ENCODE measurements at regions of chr5 and their contacts with region 1.

Region 1: GRCh38 chr5:172902497-172903200 is 56.6 kb upstream of the RPL26L1 start:
- DNase-seq: peak; percentile 79 to 97
- H3K4me3 ChIP-seq: no peak overlapping the region
- H3K27ac ChIP-seq: peak overlapping the region; percentile 99
- H3K4me1 ChIP-seq: peaks cover 51% of the 10 kb centered on the region
- H3K27me3 ChIP-seq: no peaks in the 10 kb centered on the region
- CTCF ChIP-seq: peak; percentile 72

Region 2: GRCh38 chr5:172764849-172765765 is 137.5 kb before region 1 on chr5:
- CTCF ChIA-PET with region 1: no interaction called
- POLR2A ChIA-PET with region 1: interaction called, 9 read pairs
- intact Hi-C with region 1: loop called (anchors 1 kb)
- DNase-seq: peak; percentile 97 to 99
- H3K4me3 ChIP-seq: peak overlapping the region; percentile 52; the same call in 1 of the 2 replicates
- H3K27ac ChIP-seq: peak overlapping the region; percentile 59
- H3K4me1 ChIP-seq: peaks cover 31% of the 10 kb centered on the region
- H3K27me3 ChIP-seq: no peaks in the 10 kb centered on the region
- CTCF ChIP-seq: no peak

Region 3: GRCh38 chr5:172801184-172801671 is 101.4 kb before region 1 on chr5:
- CTCF ChIA-PET with region 1: interaction called, 5 read pairs
- POLR2A ChIA-PET with region 1: no interaction called
- intact Hi-C with region 1: loop called (anchors 1 kb)
- DNase-seq: peak; percentile 67 to 97
- H3K4me3 ChIP-seq: no peak overlapping the region
- H3K27ac ChIP-seq: peak overlapping the region; percentile 97
- H3K4me1 ChIP-seq: peaks cover 57% of the 10 kb centered on the region
- H3K27me3 ChIP-seq: no peaks in the 10 kb centered on the region
- CTCF ChIP-seq: no peak

Region 4: DNA sequence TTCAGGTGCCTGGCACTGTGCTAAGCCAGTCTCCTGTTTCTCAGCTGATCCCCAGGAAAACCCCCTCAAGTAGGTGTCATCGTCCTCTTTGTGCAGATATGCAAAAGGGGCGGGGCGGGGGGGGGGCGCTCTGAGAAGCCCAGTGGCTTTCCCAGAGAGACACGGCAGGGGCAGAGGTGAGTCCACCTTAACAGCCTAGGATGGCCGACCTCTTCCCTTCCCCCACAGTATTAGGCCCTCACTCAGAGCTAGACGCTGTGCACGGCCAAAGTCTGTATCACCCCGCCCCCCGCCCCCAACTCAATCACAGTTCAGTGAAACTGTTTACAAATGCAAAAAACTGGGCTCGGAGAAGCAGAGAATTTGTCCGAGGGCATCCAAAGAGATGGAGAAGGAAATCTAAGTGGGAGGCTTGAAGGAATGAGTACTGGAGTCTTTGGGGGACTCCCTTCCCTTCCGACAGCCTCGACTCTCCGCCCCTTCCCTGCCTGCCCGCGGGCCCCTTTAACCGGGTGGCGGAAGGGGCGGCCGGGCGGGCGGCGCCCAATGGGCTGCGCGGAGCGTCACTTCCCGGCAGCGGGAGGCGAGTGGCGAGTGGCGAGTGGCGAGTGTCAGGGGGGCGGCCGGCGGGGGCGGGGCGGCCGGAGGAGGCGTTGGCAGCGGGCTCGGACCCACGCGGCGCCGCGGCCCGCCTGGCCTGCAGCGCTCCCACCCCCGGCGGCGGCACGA is 68.8 kb before region 1 on chr5 and contains the start of gene ERGIC1:
- CTCF ChIA-PET with region 1: no interaction called
- POLR2A ChIA-PET with region 1: no interaction called
- intact Hi-C with region 1: loop called (anchors 1 kb)
- DNase-seq: peak; percentile 64 to 88
- H3K4me3 ChIP-seq: peak within 1 kb of the TSS; percentile 85
- H3K27ac ChIP-seq: peak within 1 kb of the TSS; percentile 63
- H3K4me1 ChIP-seq: peaks cover 20% of the 10 kb centered on the region
- H3K27me3 ChIP-seq: no peaks in the 10 kb centered on the region
- CTCF ChIP-seq: no peak
- total RNA-seq, gene ERGIC1: 106 and 159 TPM in 2 replicates

Region 5: GRCh38 chr5:172868924-172869591 is 33.6 kb before region 1 on chr5:
- CTCF ChIA-PET with region 1: no interaction called
- POLR2A ChIA-PET with region 1: no interaction called
- intact Hi-C with region 1: loop called (anchors 2 kb)
- DNase-seq: peak; percentile 63 to 88
- H3K4me3 ChIP-seq: no peak overlapping the region
- H3K27ac ChIP-seq: peak overlapping the region; percentile 84
- H3K4me1 ChIP-seq: peaks cover 44% of the 10 kb centered on the region
- H3K27me3 ChIP-seq: no peaks in the 10 kb centered on the region
- CTCF ChIP-seq: no peak

Region 6: GRCh38 chr5:172932313-172933017 is 29.8 kb after region 1 on chr5:
- CTCF ChIA-PET with region 1: interaction called, 4 read pairs
- POLR2A ChIA-PET with region 1: no interaction called
- intact Hi-C with region 1: loop called (anchors 1 kb)
- DNase-seq: peak in 1 of 2 experiments; percentile 70
- H3K4me3 ChIP-seq: no peak overlapping the region
- H3K27ac ChIP-seq: no peak overlapping the region
- H3K4me1 ChIP-seq: peaks cover 22% of the 10 kb centered on the region
- H3K27me3 ChIP-seq: no peaks in the 10 kb centered on the region
- CTCF ChIP-seq: peak; percentile 85